IMR-90 (cell line): ENCODE measurements at regions of chr3 and their contacts with region 1.

Region 1: DNA sequence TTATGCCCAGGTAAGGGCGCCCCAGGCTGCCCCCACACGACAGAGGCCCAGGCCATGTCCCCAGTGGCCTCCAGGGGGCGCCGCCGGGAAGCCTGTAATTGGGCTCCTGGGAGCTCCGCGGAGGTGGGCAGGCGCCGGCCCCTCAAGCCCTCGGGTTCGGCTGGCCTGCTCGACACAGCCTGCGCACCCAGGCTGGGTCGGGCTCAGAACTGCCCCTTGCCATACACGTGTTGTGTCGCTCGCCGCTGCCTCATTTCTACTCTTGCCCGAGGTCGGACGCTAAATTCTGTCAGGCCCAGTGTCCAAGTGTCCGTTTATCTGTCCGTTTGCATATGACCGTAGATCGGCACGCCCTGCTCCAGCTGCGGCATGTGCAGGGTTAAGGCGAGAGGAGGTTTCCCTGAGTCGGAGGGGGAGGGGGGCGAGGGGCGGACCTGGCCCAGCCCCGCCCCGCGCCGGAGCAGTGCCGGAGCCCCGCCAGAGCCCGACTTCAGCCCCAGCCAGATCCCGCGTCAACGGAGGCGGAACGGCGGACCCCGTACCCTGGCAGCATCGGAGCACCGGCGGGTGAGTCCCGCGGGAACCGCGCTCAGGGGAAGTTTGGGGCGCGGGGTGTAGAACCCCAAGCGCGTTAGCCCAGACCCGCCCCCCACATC is at the start of gene KLHDC8B:
- DNase-seq: peak; percentile 81
- ATAC-seq: peak; percentile 95
- H3K4me3 ChIP-seq: peak within 1 kb of the TSS; percentile 50
- H3K27ac ChIP-seq: peak within 1 kb of the TSS; percentile 66
- H3K4me1 ChIP-seq: peaks cover 26% of the 10 kb centered on the region
- H3K27me3 ChIP-seq: no peaks in the 10 kb centered on the region
- CTCF ChIP-seq: peak; percentile 87
- POLR2A ChIP-seq: no peak
- RAD21 ChIP-seq: peak; percentile 58
- total RNA-seq, gene KLHDC8B: 16.1 and 16.5 TPM in 2 replicates

Region 2: GRCh38 chr3:49276475-49277382 is 105.5 kb after region 1 on chr3 and contains the start of gene C3orf62:
- CTCF ChIA-PET with region 1: interaction called, 4 read pairs
- POLR2A ChIA-PET with region 1: no interaction called
- dilution Hi-C with region 1: no loop called
- in situ Hi-C with region 1: no loop called
- intact Hi-C with region 1: loop called (anchors 1 kb)
- DNase-seq: peak; percentile 73
- ATAC-seq: peak; percentile 98
- H3K4me3 ChIP-seq: peak within 1 kb of the TSS; percentile 47
- H3K27ac ChIP-seq: peak within 1 kb of the TSS; percentile 90
- H3K4me1 ChIP-seq: peaks cover 11% of the 10 kb centered on the region
- H3K27me3 ChIP-seq: no peaks in the 10 kb centered on the region
- CTCF ChIP-seq: no peak
- POLR2A ChIP-seq: no peak
- RAD21 ChIP-seq: no peak
- total RNA-seq, gene C3orf62: 0.83 and 0.90 TPM in 2 replicates

Region 3: GRCh38 chr3:49295489-49296058 is 124.3 kb after region 1 on chr3:
- CTCF ChIA-PET with region 1: no interaction called
- POLR2A ChIA-PET with region 1: no interaction called
- dilution Hi-C with region 1: no loop called
- in situ Hi-C with region 1: no loop called
- intact Hi-C with region 1: loop called (anchors 5 kb)
- DNase-seq: peak; percentile 35
- ATAC-seq: no peak
- H3K4me3 ChIP-seq: no peak overlapping the region
- H3K27ac ChIP-seq: no peak overlapping the region
- H3K4me1 ChIP-seq: no peaks in the 10 kb centered on the region
- H3K27me3 ChIP-seq: no peaks in the 10 kb centered on the region
- CTCF ChIP-seq: peak; percentile 55
- POLR2A ChIP-seq: no peak
- RAD21 ChIP-seq: peak; percentile 60

Region 4: GRCh38 chr3:49428697-49429100 is 257.5 kb after region 1 on chr3:
- CTCF ChIA-PET with region 1: no interaction called
- POLR2A ChIA-PET with region 1: no interaction called
- dilution Hi-C with region 1: no loop called
- in situ Hi-C with region 1: loop called (anchors 25 kb)
- intact Hi-C with region 1: no loop called
- DNase-seq: no peak
- ATAC-seq: peak; percentile 4
- H3K4me3 ChIP-seq: peak overlapping the region; percentile 51
- H3K27ac ChIP-seq: peak overlapping the region; percentile 51; the same call in 1 of the 2 replicates
- H3K4me1 ChIP-seq: no peaks in the 10 kb centered on the region
- H3K27me3 ChIP-seq: no peaks in the 10 kb centered on the region
- CTCF ChIP-seq: no peak
- POLR2A ChIP-seq: no peak
- RAD21 ChIP-seq: no peak

Region 5: DNA sequence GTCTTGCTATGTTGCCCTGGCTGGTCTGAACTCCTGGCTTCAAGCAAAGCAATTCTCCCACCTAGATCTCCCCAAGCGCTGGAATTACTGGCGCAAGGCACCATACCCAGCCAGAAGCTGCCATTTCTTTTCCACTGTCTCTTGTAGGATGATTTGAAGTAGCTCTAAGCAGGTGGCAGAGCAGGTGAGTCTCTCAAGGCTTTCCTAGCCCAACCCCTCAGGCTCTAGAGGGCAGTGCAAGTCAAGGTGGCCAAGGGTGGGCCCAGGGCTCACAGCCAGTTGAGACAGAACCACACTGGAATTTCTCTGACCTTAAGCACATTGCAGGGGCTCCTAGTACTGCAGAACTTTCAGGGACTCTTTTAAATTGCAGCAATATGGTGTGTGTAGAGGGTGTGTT is 283.2 kb after region 1 on chr3:
- CTCF ChIA-PET with region 1: interaction called, 4 read pairs
- POLR2A ChIA-PET with region 1: no interaction called
- dilution Hi-C with region 1: no loop called
- in situ Hi-C with region 1: loop called (anchors 25 kb)
- intact Hi-C with region 1: loop called (anchors 1 kb)
- DNase-seq: no peak
- ATAC-seq: no peak
- H3K4me3 ChIP-seq: no peak overlapping the region
- H3K27ac ChIP-seq: no peak overlapping the region
- H3K4me1 ChIP-seq: peaks cover 8% of the 10 kb centered on the region
- H3K27me3 ChIP-seq: no peaks in the 10 kb centered on the region
- CTCF ChIP-seq: no peak
- POLR2A ChIP-seq: no peak
- RAD21 ChIP-seq: no peak; the same call in 1 of the 2 replicates